Naive thymus-derived CD4-positive, alpha-beta T cell (primary cell): ENCODE measurements at regions of chr13 and their contacts with region 1.

Region 1: GRCh38 chr13:20160847-20161274 is at the start of gene GJA3:
- DNase-seq: peak in 8 of 9 donors; percentile 30 to 61 (median 44)
- ATAC-seq: peak; percentile 68
- H3K4me3 ChIP-seq: peak within 1 kb of the TSS; percentile 43
- H3K4me3 Mint-ChIP-seq: peak within 1 kb of the TSS; percentile 78 to 90 (median 86)
- H3K27ac ChIP-seq: no peak within 1 kb of the TSS
- H3K27ac Mint-ChIP-seq: peak within 1 kb of the TSS in 3 of 9 donors; percentile 51 to 72 (median 55)
- H3K4me1 ChIP-seq: peaks cover 5 to 6% of the 10 kb centered on the region in 2 donors
- H3K4me1 Mint-ChIP-seq: peaks cover 0 to 22% (median 13%) of the 10 kb centered on the region in 7 donors
- H3K27me3 ChIP-seq: peaks cover 0 to 29% of the 10 kb centered on the region in 2 donors
- H3K27me3 Mint-ChIP-seq: peaks cover 21 to 73% (median 46%) of the 10 kb centered on the region in 5 donors
- total RNA-seq, gene GJA3: 0.05 to 0.17 (median 0.08) TPM in 3 of 5 experiments, not detected in the others

Region 2: DNA sequence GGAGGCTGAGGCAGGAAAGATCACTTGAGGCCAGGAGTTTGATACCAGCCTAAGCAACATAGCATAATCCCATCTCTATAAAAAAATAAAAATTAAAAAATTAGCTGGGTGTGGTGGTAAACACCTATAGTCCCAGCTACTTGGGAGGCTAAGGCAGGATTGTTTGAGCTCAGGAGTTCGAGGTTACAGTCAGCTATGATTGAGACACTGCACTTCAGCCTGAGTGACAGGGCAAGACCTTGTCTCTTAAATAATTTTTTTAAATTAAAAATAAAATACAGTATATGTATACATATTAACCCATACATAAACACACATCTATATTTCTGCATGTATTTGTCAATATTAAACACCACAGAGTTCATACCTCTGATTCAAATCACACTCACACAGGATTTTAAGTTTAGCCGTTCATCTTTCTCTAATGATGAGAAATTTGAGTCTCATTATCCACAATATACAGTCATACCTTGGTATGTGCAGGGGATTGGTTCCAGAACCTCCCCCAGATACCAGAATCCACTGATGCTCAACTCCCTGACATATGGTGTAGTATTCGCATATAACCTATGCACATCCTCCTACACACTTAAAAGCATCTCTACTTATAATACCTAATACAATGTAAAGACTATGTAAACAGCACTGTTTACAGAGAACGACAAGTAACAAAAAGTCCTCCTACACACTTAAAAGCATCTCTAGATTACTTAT is 422.9 kb before region 1 on chr13:
- CTCF ChIA-PET with region 1: no interaction called
- POLR2A ChIA-PET with region 1: no interaction called
- intact Hi-C with region 1: no loop called
- DNase-seq: no peak
- ATAC-seq: no peak
- H3K4me3 ChIP-seq: no peak overlapping the region
- H3K4me3 Mint-ChIP-seq: no peak overlapping the region
- H3K27ac ChIP-seq: no peak overlapping the region
- H3K27ac Mint-ChIP-seq: peak overlapping the region in 2 of 9 donors; percentile 41 to 84
- H3K4me1 ChIP-seq: no peaks in the 10 kb centered on the region
- H3K4me1 Mint-ChIP-seq: peaks cover 16 to 35% (median 26%) of the 10 kb centered on the region in 7 donors
- H3K27me3 ChIP-seq: no peaks in the 10 kb centered on the region
- H3K27me3 Mint-ChIP-seq: no peaks in the 10 kb centered on the region

Region 3: DNA sequence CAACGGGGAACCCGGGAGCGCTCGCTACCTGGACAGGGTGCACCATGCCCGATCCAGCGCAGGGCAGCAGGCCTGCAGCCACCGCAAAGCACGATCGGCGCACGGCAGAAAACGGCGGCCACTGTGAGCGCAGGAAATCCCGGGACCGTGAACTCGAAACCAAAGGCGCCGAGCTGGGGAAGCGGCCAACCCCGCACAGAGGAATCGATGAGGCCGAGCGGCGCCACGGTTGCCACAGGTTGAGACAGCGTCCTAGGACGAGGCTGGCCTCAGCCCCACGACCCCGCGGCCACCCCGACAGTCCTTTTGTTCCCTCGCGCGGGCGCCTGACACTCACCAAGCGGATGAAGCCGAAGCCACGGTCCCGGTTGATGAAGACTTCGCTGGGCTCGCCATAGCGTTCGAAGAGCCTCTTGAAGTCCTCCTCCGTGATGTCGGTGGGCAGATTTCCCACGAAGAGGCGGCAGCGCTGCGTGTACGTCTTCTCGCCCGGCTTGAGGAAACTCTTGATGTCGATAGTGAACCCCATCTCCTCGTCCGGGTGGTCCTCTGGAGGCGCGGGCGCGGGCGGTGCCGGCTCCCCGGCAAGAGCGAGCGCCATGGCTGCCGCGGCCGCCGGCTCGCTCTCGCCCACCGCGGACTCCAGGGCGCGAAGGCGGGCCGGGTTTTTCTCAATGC is 378.7 kb before region 1 on chr13:
- CTCF ChIA-PET with region 1: no interaction called
- POLR2A ChIA-PET with region 1: no interaction called
- intact Hi-C with region 1: loop called in 1 of 2 experiments (anchors 2 kb)
- DNase-seq: peak; percentile 26 to 61 (median 49)
- ATAC-seq: peak; percentile 63
- H3K4me3 ChIP-seq: peak overlapping the region; percentile 99
- H3K4me3 Mint-ChIP-seq: peak overlapping the region; percentile 96 to 100 (median 98)
- H3K27ac ChIP-seq: peak overlapping the region; percentile 98
- H3K27ac Mint-ChIP-seq: peak overlapping the region; percentile 96 to 100 (median 99)
- H3K4me1 ChIP-seq: peaks cover 0 to 8% of the 10 kb centered on the region in 2 donors
- H3K4me1 Mint-ChIP-seq: peaks cover 0 to 13% (median 10%) of the 10 kb centered on the region in 7 donors
- H3K27me3 ChIP-seq: no peaks in the 10 kb centered on the region
- H3K27me3 Mint-ChIP-seq: peaks cover 0 to 5% (median 0%) of the 10 kb centered on the region in 5 donors

Region 4: GRCh38 chr13:19984430-19985218 is 176.2 kb before region 1 on chr13:
- CTCF ChIA-PET with region 1: interaction called, 4 read pairs
- POLR2A ChIA-PET with region 1: no interaction called
- intact Hi-C with region 1: loop called (anchors 1 kb)
- DNase-seq: peak in 3 of 9 donors; percentile 4 to 22 (median 11)
- ATAC-seq: peak; percentile 72
- H3K4me3 ChIP-seq: no peak overlapping the region
- H3K4me3 Mint-ChIP-seq: no peak overlapping the region
- H3K27ac ChIP-seq: no peak overlapping the region
- H3K27ac Mint-ChIP-seq: peak overlapping the region in 2 of 9 donors; percentile 3 to 72
- H3K4me1 ChIP-seq: peaks cover 8 to 21% of the 10 kb centered on the region in 2 donors
- H3K4me1 Mint-ChIP-seq: peaks cover 21 to 67% (median 52%) of the 10 kb centered on the region in 7 donors
- H3K27me3 ChIP-seq: no peaks in the 10 kb centered on the region
- H3K27me3 Mint-ChIP-seq: no peaks in the 10 kb centered on the region

Region 5: GRCh38 chr13:20090349-20090748 is 70.5 kb before region 1 on chr13:
- CTCF ChIA-PET with region 1: no interaction called
- POLR2A ChIA-PET with region 1: no interaction called
- intact Hi-C with region 1: loop called (anchors 1 kb)
- DNase-seq: peak in 4 of 9 donors; percentile 18 to 24 (median 22)
- ATAC-seq: peak; percentile 54
- H3K4me3 ChIP-seq: no peak overlapping the region
- H3K4me3 Mint-ChIP-seq: no peak overlapping the region
- H3K27ac ChIP-seq: no peak overlapping the region
- H3K27ac Mint-ChIP-seq: peak overlapping the region in 1 of 9 donors; percentile 67
- H3K4me1 ChIP-seq: no peaks in the 10 kb centered on the region
- H3K4me1 Mint-ChIP-seq: no peaks in the 10 kb centered on the region
- H3K27me3 ChIP-seq: no peaks in the 10 kb centered on the region
- H3K27me3 Mint-ChIP-seq: no peaks in the 10 kb centered on the region

Region 6: GRCh38 chr13:20127577-20128466 is 33.0 kb before region 1 on chr13:
- CTCF ChIA-PET with region 1: no interaction called
- POLR2A ChIA-PET with region 1: no interaction called
- intact Hi-C with region 1: loop called (anchors 2 kb)
- DNase-seq: peak in 7 of 9 donors; percentile 24 to 51 (median 37)
- ATAC-seq: peak; percentile 85
- H3K4me3 ChIP-seq: peak overlapping the region; percentile 60
- H3K4me3 Mint-ChIP-seq: peak overlapping the region; percentile 51 to 80 (median 73)
- H3K27ac ChIP-seq: no peak overlapping the region
- H3K27ac Mint-ChIP-seq: no peak overlapping the region
- H3K4me1 ChIP-seq: peaks cover 0 to 3% of the 10 kb centered on the region in 2 donors
- H3K4me1 Mint-ChIP-seq: peaks cover 0 to 7% (median 5%) of the 10 kb centered on the region in 7 donors
- H3K27me3 ChIP-seq: peaks cover 4 to 6% of the 10 kb centered on the region in 2 donors
- H3K27me3 Mint-ChIP-seq: peaks cover 7 to 45% (median 18%) of the 10 kb centered on the region in 5 donors